ENCODE measurements at regions of chr1 and their contacts with region 1.

Region 1: DNA sequence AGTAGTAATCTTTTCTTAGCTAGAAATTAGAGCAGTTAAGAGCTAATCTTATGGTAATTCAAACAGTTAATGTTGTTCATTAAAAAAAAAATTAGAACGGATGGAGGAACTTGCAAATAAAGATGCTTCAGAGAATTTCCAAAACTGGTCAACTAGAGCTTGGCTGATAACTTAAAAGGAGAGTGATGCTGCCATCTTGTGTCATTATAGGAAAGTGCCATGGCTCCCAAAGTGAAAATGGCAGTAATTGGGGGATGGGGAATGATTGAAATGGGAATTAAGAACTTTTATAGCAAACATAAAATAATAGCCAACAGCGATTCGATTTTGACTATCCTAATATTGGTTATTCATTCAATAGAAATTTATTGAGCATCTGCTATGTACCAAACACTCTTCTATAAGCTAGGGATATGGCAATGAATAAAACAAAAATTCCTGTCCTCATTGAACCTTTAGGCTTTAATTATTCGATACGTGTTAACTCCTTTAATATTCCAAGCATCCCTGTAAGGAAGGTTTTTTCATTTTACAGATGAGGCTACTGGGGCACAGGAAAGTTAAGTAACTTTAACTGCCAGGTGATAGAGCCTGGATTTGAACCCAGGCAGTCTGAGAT is 5.7 kb upstream of the PLPP3 start:
- DNase-seq: no peak
- ATAC-seq: peak; percentile 66
- H3K4me3 Mint-ChIP-seq: no peak overlapping the region
- H3K27ac Mint-ChIP-seq: no peak overlapping the region
- H3K4me1 Mint-ChIP-seq: peaks cover 4% of the 10 kb centered on the region
- H3K27me3 Mint-ChIP-seq: peaks cover 2% of the 10 kb centered on the region
- CTCF ChIP-seq: peak; percentile 96

Region 2: GRCh38 chr1:55140546-55140983 is 1444.5 kb before region 1 on chr1:
- CTCF ChIA-PET with region 1: interaction called, 6 read pairs
- POLR2A ChIA-PET with region 1: no interaction called
- intact Hi-C with region 1: loop called (anchors 1 kb)
- DNase-seq: no peak
- ATAC-seq: peak; percentile 90
- H3K4me3 Mint-ChIP-seq: no peak overlapping the region
- H3K27ac Mint-ChIP-seq: peak overlapping the region; percentile 51
- H3K4me1 Mint-ChIP-seq: peaks cover 7% of the 10 kb centered on the region
- H3K27me3 Mint-ChIP-seq: no peaks in the 10 kb centered on the region
- CTCF ChIP-seq: peak; percentile 41

Region 3: DNA sequence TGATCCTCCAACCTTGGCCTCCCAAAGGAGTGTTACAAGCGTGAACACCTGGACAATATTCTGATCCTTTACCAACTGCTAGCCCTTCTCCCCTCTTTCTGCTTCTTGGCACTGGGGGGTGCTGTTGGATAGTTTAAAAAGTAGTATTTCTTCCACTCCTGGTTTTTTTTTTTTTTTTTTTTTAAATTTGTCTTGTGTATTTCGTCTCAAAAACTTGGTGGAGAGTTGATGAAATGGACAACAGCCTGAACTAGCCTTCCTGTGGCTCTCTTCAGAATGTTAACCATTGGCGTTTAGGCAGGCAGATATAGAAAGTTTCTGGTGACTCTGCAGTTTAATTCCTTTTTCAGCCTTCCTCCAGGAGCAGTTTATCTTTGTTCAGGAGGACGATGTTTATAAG is 1300.2 kb before region 1 on chr1:
- CTCF ChIA-PET with region 1: interaction called, 66 read pairs
- POLR2A ChIA-PET with region 1: interaction called, 6 read pairs
- intact Hi-C with region 1: loop called (anchors 1 kb)
- DNase-seq: no peak
- ATAC-seq: no peak
- H3K4me3 Mint-ChIP-seq: no peak overlapping the region
- H3K27ac Mint-ChIP-seq: no peak overlapping the region
- H3K4me1 Mint-ChIP-seq: peaks cover 47% of the 10 kb centered on the region
- H3K27me3 Mint-ChIP-seq: peaks cover 3% of the 10 kb centered on the region
- CTCF ChIP-seq: no peak

Region 4: GRCh38 chr1:55375617-55376258 is 1209.3 kb before region 1 on chr1:
- CTCF ChIA-PET with region 1: interaction called, 83 read pairs
- POLR2A ChIA-PET with region 1: interaction called, 3 read pairs
- intact Hi-C with region 1: loop called (anchors 1 kb)
- DNase-seq: no peak
- ATAC-seq: peak; percentile 49
- H3K4me3 Mint-ChIP-seq: no peak overlapping the region
- H3K27ac Mint-ChIP-seq: no peak overlapping the region
- H3K4me1 Mint-ChIP-seq: no peaks in the 10 kb centered on the region
- H3K27me3 Mint-ChIP-seq: peaks cover 1% of the 10 kb centered on the region
- CTCF ChIP-seq: peak; percentile 33

Region 5: DNA sequence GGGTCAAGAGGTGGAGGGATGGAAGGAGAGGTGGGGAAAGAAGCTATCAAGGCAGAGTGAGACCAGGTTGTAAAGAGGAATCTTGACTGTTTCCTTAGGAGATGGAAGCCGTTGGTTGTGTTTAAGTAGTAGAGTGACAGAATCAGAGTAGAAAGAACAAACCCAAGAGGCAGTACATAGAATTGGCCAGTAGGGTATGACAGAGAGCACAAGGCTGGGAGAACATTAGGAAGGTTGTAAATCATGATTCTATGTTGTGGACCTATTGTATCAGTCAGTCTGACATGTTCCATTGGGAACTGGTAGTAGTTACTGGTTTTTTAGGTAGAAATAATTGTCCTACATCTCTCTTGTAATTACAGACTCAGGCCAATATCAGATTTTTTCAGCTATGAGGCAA is 883.0 kb before region 1 on chr1:
- CTCF ChIA-PET with region 1: interaction called, 22 read pairs
- POLR2A ChIA-PET with region 1: no interaction called
- intact Hi-C with region 1: loop called (anchors 1 kb)
- DNase-seq: no peak
- ATAC-seq: no peak
- H3K4me3 Mint-ChIP-seq: no peak overlapping the region
- H3K27ac Mint-ChIP-seq: no peak overlapping the region
- H3K4me1 Mint-ChIP-seq: no peaks in the 10 kb centered on the region
- H3K27me3 Mint-ChIP-seq: peaks cover 6% of the 10 kb centered on the region
- CTCF ChIP-seq: no peak

Region 6: GRCh38 chr1:56289251-56289650 is 295.8 kb before region 1 on chr1:
- CTCF ChIA-PET with region 1: interaction called, 5 read pairs
- POLR2A ChIA-PET with region 1: no interaction called
- intact Hi-C with region 1: loop called (anchors 2 kb)
- DNase-seq: no peak
- ATAC-seq: no peak
- H3K4me3 Mint-ChIP-seq: no peak overlapping the region
- H3K27ac Mint-ChIP-seq: no peak overlapping the region
- H3K4me1 Mint-ChIP-seq: no peaks in the 10 kb centered on the region
- H3K27me3 Mint-ChIP-seq: no peaks in the 10 kb centered on the region
- CTCF ChIP-seq: no peak

Region 7: DNA sequence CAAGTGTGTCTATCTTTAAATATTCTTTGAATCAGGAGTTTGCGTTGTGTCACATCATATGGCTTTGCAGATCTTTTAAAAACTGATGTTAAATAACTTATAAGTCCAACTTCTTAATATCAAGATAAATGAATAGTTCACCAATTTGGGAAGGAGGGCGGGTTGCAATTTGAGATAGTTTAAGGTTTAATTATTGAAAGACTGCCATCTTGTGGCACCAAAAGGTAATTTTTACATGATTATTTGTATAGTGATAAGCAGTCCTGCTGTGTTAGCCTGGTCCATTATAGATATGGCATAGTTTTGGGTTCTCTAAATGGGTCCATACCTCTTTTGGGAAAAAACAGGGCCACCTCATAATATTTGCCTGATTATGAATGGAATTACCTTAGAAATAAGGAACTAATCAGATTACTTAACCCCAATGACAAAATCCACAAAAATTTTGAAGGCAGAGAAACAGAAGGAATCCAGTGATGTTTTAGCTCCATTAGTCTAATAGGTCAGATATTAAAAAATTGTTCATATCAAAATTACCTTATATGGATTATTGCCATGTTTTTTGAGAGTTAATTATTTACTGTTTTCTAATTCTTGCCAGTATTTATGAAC is 124.4 kb after region 1 on chr1:
- CTCF ChIA-PET with region 1: interaction called, 13 read pairs
- POLR2A ChIA-PET with region 1: no interaction called
- intact Hi-C with region 1: loop called (anchors 2 kb)
- DNase-seq: no peak
- ATAC-seq: no peak
- H3K4me3 Mint-ChIP-seq: no peak overlapping the region
- H3K27ac Mint-ChIP-seq: no peak overlapping the region
- H3K4me1 Mint-ChIP-seq: no peaks in the 10 kb centered on the region
- H3K27me3 Mint-ChIP-seq: peaks cover 25% of the 10 kb centered on the region
- CTCF ChIP-seq: no peak